MCF 10A (cell line): ENCODE measurements at regions of chr1 and their contacts with region 1.

Region 1: GRCh38 chr1:153572569-153573015 is 6.9 kb upstream of the S100A2 start:
- DNase-seq: peak; percentile 94
- H3K4me3 Mint-ChIP-seq: no peak overlapping the region
- H3K27ac Mint-ChIP-seq: peak overlapping the region; percentile 67
- H3K4me1 Mint-ChIP-seq: peaks cover 33% of the 10 kb centered on the region
- H3K27me3 Mint-ChIP-seq: no peaks in the 10 kb centered on the region
- CTCF ChIP-seq: peak; percentile 98

Region 2: GRCh38 chr1:153494976-153495535 is 77.5 kb before region 1 on chr1:
- CTCF ChIA-PET with region 1: interaction called, 12 read pairs
- POLR2A ChIA-PET with region 1: no interaction called
- intact Hi-C with region 1: no loop called
- DNase-seq: peak; percentile 81
- H3K4me3 Mint-ChIP-seq: no peak overlapping the region
- H3K27ac Mint-ChIP-seq: no peak overlapping the region
- H3K4me1 Mint-ChIP-seq: peaks cover 27% of the 10 kb centered on the region
- H3K27me3 Mint-ChIP-seq: peaks cover 39% of the 10 kb centered on the region
- CTCF ChIP-seq: peak; percentile 99

Region 3: DNA sequence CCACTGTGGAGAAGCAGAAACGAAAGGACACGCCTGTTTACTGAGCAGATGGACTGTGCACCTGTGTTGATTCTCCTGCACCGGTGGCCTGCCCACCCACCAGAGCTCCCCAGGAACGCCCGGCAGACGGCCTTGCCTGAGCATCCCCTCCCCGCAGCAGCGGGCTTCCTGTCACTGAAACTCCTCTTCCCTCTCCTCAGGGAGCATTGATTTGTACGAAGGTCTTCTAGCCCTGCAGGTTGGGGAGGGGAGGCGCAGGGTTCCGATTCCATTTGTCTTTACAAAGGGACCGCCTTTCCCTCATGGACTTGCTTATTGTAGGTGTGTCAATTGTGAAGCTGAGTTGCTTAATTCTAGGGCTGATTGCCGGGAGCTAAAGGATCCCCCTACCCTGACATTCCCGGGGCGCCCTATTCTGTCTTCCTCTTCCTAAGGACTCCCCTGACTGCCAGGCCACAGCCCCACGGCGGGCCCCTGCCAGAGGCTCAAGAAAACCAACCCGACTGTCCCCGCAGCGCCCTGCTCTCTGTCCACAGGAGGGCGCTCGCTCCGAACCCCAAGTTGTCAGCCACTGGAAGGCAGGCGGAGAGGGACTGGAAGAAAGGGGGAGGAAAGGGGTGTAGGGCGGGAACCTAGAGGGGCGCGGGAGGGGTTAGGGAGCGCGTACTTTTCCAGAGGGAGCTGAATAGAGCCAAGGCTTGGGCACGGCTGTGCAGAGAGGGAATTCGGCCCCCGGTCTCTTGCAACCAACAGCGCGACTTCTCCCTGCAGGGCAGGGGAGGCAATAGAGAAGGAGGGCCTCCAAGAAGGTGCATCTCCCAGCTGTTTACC is 39.6 kb before region 1 on chr1:
- CTCF ChIA-PET with region 1: interaction called, 224 read pairs
- POLR2A ChIA-PET with region 1: interaction called, 476 read pairs
- intact Hi-C with region 1: loop called (anchors 1 kb)
- DNase-seq: peak; percentile 97
- H3K4me3 Mint-ChIP-seq: peak overlapping the region; percentile 99
- H3K27ac Mint-ChIP-seq: peak overlapping the region; percentile 75
- H3K4me1 Mint-ChIP-seq: peaks cover 47% of the 10 kb centered on the region
- H3K27me3 Mint-ChIP-seq: no peaks in the 10 kb centered on the region
- CTCF ChIP-seq: peak; percentile 93

Region 4: DNA sequence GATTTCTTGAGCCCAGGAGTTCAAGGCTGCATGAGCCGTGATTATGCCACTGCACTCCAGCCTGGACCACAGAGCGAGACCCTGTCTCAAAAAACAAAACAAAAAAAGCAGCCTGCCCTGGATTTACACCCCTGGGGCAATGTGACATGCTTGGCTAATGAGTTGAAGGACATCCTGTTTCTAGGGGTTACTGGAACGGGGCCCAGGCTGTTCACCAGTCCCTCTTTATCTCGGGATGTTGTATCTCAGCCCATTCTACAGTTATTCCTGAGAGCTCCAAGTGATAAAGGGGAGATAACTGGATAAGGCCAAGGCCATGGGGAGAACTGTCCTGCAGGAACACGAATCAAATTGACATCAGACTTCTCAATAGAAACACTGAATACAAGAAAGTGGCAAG is 14.7 kb after region 1 on chr1:
- CTCF ChIA-PET with region 1: interaction called, 19 read pairs
- POLR2A ChIA-PET with region 1: interaction called, 8 read pairs
- intact Hi-C with region 1: no loop called
- DNase-seq: no peak
- H3K4me3 Mint-ChIP-seq: no peak overlapping the region
- H3K27ac Mint-ChIP-seq: no peak overlapping the region
- H3K4me1 Mint-ChIP-seq: peaks cover 16% of the 10 kb centered on the region
- H3K27me3 Mint-ChIP-seq: no peaks in the 10 kb centered on the region
- CTCF ChIP-seq: no peak

Region 5: DNA sequence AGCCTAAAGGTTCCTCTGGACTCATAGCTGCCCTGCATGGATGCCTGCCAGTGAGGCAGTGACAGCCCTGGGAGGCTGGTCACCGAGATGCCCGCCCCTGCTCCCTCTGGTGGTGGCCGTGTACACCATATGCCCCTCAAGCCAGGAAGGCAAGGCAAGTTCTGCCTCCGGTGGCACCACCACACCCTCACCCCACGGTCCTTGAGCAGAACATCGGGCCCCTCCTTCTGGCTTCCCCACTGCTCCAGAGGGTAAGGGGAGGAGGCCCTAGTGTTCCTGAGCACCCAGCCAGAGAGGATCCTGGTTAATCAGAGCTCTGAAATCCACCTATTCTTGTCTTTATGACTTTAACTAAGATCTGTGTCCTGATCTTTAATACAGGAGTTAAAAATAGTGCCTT is 45.1 kb after region 1 on chr1:
- CTCF ChIA-PET with region 1: interaction called, 214 read pairs
- POLR2A ChIA-PET with region 1: interaction called, 280 read pairs
- intact Hi-C with region 1: loop called (anchors 1 kb)
- DNase-seq: peak; percentile 86
- H3K4me3 Mint-ChIP-seq: peak overlapping the region; percentile 90
- H3K27ac Mint-ChIP-seq: peak overlapping the region; percentile 76
- H3K4me1 Mint-ChIP-seq: peaks cover 47% of the 10 kb centered on the region
- H3K27me3 Mint-ChIP-seq: no peaks in the 10 kb centered on the region
- CTCF ChIP-seq: peak; percentile 90

Region 6: DNA sequence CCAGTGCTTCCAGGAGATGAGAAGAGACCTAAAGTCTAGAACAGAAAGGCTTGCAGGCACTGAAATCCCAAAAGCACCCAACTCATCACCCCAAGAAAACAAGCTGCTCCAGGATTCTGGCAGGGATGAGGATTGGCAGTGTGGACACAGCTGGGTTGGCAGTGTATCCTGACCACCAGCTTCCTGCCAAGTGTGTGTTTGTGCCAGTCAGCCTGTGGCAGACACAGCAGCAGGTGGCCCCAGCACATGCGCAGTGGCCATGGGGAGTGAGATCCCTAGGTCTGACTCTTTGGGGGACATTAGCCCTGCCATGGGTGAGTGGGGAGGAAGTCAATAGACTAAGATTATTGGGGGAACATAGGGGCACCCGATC is 77.3 kb after region 1 on chr1:
- CTCF ChIA-PET with region 1: interaction called, 16 read pairs
- POLR2A ChIA-PET with region 1: interaction called, 6 read pairs
- intact Hi-C with region 1: no loop called
- DNase-seq: peak; percentile 54
- H3K4me3 Mint-ChIP-seq: no peak overlapping the region
- H3K27ac Mint-ChIP-seq: peak overlapping the region; percentile 10
- H3K4me1 Mint-ChIP-seq: peaks cover 13% of the 10 kb centered on the region
- H3K27me3 Mint-ChIP-seq: no peaks in the 10 kb centered on the region
- CTCF ChIP-seq: no peak

Region 7: DNA sequence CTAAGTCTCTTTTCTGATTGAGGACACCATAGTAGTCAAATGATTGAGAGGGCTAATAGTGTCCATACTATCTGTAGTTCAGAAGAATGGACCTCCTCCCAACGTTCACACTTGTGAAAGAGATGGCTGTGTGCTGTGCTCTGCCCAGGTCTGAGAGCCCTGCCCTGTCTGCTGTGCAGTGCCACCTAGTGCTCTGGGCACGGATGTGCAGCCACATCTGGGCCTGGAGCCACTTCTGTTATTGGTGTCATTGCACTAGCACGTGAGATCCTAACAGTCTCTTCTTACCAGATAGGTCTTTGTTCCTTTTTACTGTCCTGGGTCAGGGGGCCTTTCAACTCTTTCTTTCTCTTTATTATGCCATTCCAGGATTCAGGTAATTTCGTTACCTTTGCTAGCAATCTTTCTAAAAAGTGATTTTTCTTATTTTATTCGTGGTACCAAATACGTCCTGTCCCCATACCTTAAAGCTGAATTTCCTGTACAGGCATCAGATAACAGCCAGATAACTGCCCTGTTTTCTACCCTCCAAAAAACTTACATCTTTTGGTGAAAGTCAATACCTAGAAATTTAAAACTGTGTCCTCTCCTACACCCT is 176.9 kb after region 1 on chr1:
- CTCF ChIA-PET with region 1: interaction called, 11 read pairs
- POLR2A ChIA-PET with region 1: interaction called, 3 read pairs
- intact Hi-C with region 1: loop called (anchors 1 kb)
- DNase-seq: peak; percentile 89
- H3K4me3 Mint-ChIP-seq: no peak overlapping the region
- H3K27ac Mint-ChIP-seq: no peak overlapping the region
- H3K4me1 Mint-ChIP-seq: peaks cover 5% of the 10 kb centered on the region
- H3K27me3 Mint-ChIP-seq: no peaks in the 10 kb centered on the region
- CTCF ChIP-seq: peak; percentile 98

Region 8: GRCh38 chr1:153953859-153954365 is 381.3 kb after region 1 on chr1:
- CTCF ChIA-PET with region 1: no interaction called
- POLR2A ChIA-PET with region 1: no interaction called
- intact Hi-C with region 1: no loop called
- DNase-seq: no peak
- H3K4me3 Mint-ChIP-seq: no peak overlapping the region
- H3K27ac Mint-ChIP-seq: no peak overlapping the region
- H3K4me1 Mint-ChIP-seq: peaks cover 30% of the 10 kb centered on the region
- H3K27me3 Mint-ChIP-seq: no peaks in the 10 kb centered on the region
- CTCF ChIP-seq: no peak